GM13976 (cell line): ENCODE measurements at regions of chr14 and their contacts with region 1.

Region 1: DNA sequence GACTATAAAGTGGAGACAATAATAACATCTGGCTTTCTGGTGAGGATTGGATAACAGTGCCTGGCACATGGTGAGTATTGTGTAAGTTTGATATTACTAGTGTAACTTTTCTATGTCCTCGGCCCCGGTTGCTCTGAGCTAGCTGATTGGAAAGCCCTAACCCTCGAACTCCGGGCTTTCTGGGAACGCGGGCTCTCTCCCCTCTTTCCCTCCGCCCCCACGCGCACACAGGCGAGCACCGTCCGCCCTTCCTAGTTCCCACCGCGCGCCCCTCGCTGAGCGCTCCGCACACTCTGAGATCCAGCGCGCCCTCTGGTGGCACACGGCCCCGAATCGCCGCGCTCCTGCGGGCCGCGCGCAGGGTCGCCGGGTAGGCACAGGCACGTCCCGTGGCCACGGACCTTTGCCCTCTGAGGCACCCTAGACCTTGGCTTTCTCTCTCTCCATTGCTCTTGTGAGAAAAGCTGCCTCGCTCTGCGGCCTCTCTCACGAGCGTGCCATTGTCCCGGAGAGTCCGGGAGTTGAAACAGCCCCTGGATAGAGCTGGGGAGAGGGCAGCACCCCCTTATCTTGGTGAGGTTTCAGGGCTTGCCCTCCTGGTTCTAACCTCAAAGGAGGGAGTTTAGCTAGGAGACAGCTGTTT is 23.2 kb upstream of the ESRRB start:
- DNase-seq: peak; percentile 89
- CTCF ChIP-seq: peak; percentile 89

Region 2: GRCh38 chr14:75709207-75709812 is 643.5 kb before region 1 on chr14:
- in situ Hi-C with region 1: loop called (anchors 25 kb)
- DNase-seq: peak; percentile 57
- CTCF ChIP-seq: peak; percentile 72

Region 3: DNA sequence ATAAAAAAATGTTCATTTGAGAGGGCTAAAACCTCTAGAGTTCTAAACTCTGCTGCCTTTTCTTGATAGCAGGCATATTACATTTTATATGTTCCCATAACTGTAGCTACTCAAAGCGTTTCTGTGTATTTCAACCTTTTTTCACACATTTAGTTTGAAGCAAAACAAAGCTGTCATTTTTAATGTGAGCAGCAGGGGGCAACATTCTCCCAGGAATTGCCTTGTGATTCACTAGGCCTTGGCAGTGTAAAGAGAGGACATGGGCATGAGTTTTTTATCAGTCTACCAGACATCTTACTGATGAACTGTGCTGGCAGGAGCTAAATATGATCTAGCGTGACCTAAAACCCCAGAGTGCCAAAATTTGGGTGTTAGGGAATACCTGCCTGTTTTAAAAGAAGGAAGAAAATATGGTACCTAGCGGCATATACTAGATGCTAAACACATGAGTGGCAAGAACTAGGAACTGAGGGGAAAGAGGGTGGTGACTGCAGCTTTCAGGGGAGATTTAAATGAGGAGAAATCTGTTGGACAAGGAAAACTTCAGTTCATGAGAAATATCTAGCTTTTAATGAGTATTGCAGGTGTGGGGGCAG is 301.9 kb before region 1 on chr14:
- in situ Hi-C with region 1: loop called (anchors 10 kb)
- DNase-seq: peak; percentile 55
- CTCF ChIP-seq: peak; percentile 76